Ascending aorta (tissue), 2 donors: ENCODE measurements at regions of chr1 and their contacts with region 1.

Region 1: GRCh38 chr1:85692730-85693314 is 15.4 kb downstream of the ZNHIT6 start:
- DNase-seq: no peak
- H3K4me3 ChIP-seq: no peak overlapping the region
- H3K27ac ChIP-seq: no peak overlapping the region
- H3K4me1 ChIP-seq: peaks cover 0 to 2% of the 10 kb centered on the region in 2 donors
- H3K27me3 ChIP-seq: no peaks in the 10 kb centered on the region
- CTCF ChIP-seq: peak; percentile 29 to 64 (median 55)

Region 2: GRCh38 chr1:85571830-85572229 is 121.0 kb before region 1 on chr1:
- intact Hi-C with region 1: no loop called
- DNase-seq: no peak
- H3K4me3 ChIP-seq: no peak overlapping the region
- H3K27ac ChIP-seq: peak overlapping the region; percentile 73 to 92
- H3K4me1 ChIP-seq: peaks cover 9 to 64% of the 10 kb centered on the region in 2 donors
- H3K27me3 ChIP-seq: no peaks in the 10 kb centered on the region
- CTCF ChIP-seq: no peak

Region 3: DNA sequence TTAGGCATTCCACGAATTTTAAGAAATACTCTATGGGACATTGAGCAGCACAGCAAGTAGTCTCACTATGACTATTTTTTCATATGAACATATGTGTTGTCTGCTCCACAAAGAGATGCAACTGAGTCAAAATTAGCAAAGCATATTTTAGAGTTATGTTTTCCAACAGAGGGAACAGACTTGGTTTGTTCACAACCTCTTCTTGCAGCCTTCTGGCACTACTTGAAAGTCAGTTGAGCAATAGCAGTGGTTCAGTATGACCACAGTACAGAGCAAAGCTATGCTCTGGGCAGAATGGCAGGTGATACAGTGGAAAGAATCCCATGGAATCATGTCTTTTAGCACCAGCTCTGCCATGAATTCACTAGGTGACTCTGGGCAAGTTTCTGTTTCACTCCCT is 107.0 kb before region 1 on chr1:
- intact Hi-C with region 1: loop called (anchors 5 kb)
- DNase-seq: peak in 1 of 2 donors; percentile 70
- H3K4me3 ChIP-seq: no peak overlapping the region
- H3K27ac ChIP-seq: peak overlapping the region in 1 of 2 donors; percentile 92
- H3K4me1 ChIP-seq: no peaks in the 10 kb centered on the region
- H3K27me3 ChIP-seq: no peaks in the 10 kb centered on the region
- CTCF ChIP-seq: no peak

Region 4: DNA sequence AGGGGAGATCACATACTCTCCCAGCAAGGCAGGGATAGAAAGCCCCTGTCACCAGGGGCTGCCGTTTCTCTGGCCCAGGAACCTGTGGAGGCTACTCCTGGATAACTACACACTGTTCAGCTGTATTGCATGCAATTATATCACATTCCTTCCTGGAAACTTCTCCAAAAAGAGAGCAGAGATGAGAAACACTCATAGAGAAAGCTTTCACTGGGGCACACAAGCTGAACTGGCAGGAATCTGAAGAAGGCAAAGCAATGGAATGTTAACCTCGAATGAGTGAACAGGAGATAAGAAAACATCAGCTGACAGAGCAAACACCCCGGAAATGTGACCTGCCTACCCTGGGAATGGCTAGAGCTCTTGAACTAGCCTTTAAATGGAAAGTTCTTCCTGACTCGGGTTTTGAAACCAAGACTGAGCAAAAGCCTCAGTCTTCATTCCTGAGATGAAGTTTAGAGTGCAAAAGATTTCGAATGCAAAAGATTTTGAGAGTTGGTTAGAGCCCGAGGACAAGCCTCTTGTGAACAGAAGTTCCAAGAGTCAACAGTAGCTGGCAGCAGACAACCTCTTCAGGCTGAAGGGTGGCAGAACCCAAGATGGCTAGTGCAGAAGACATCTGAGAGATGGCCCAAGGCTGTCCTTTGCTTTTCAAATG is 80.0 kb before region 1 on chr1:
- intact Hi-C with region 1: loop called (anchors 5 kb)
- DNase-seq: no peak
- H3K4me3 ChIP-seq: peak overlapping the region in 1 of 2 donors; percentile 28
- H3K27ac ChIP-seq: peak overlapping the region; percentile 76 to 77
- H3K4me1 ChIP-seq: peaks cover 3 to 21% of the 10 kb centered on the region in 2 donors
- H3K27me3 ChIP-seq: no peaks in the 10 kb centered on the region
- CTCF ChIP-seq: peak; percentile 31 to 61 (median 60)